ENCODE measurements at regions of chr14 and their contacts with region 1.

Region 1: GRCh38 chr14:91177073-91178034 is 63.5 kb downstream of the DGLUCY start:
- DNase-seq: peak; percentile 38 to 73 (median 48)
- ATAC-seq: peak; percentile 83
- H3K4me3 ChIP-seq: no peak overlapping the region
- H3K27ac ChIP-seq: no peak overlapping the region
- H3K4me1 ChIP-seq: peaks cover 0 to 2% of the 10 kb centered on the region in 2 experiments; a peak in 2 of 5 replicates
- H3K27me3 ChIP-seq: no peaks in the 10 kb centered on the region
- CTCF ChIP-seq: peak; percentile 69 to 77 (median 73)
- EP300 ChIP-seq: no peak
- POLR2A ChIP-seq: no peak
- RAD21 ChIP-seq: peak; percentile 77 to 91

Region 2: GRCh38 chr14:90903101-90903500 is 274.3 kb before region 1 on chr14:
- CTCF ChIA-PET with region 1: interaction called, 33 read pairs
- POLR2A ChIA-PET with region 1: interaction called, 4 read pairs
- in situ Hi-C with region 1: loop called (anchors 5 kb)
- intact Hi-C with region 1: loop called (anchors 1 kb)
- DNase-seq: peak; percentile 43 to 59 (median 49)
- ATAC-seq: peak; percentile 92
- H3K4me3 ChIP-seq: no peak overlapping the region
- H3K27ac ChIP-seq: no peak overlapping the region
- H3K4me1 ChIP-seq: no peaks in the 10 kb centered on the region; a peak in 1 of 5 replicates
- H3K27me3 ChIP-seq: no peaks in the 10 kb centered on the region
- CTCF ChIP-seq: peak; percentile 56 to 69 (median 62); a peak in 5 of 6 replicates
- EP300 ChIP-seq: no peak
- POLR2A ChIP-seq: no peak
- RAD21 ChIP-seq: peak; percentile 66 to 79

Region 3: GRCh38 chr14:91138511-91139359 is 38.6 kb before region 1 on chr14:
- CTCF ChIA-PET with region 1: interaction called, 5 read pairs
- POLR2A ChIA-PET with region 1: no interaction called
- in situ Hi-C with region 1: no loop called
- intact Hi-C with region 1: loop called (anchors 2 kb)
- DNase-seq: peak; percentile 34 to 73 (median 51)
- ATAC-seq: peak; percentile 89
- H3K4me3 ChIP-seq: no peak overlapping the region
- H3K27ac ChIP-seq: peak overlapping the region; percentile 6; the same call in 1 of the 3 replicates
- H3K4me1 ChIP-seq: peaks cover 0 to 20% of the 10 kb centered on the region in 2 experiments; a peak in 3 of 5 replicates
- H3K27me3 ChIP-seq: no peaks in the 10 kb centered on the region
- CTCF ChIP-seq: peak; percentile 68 to 75 (median 71)
- EP300 ChIP-seq: no peak
- POLR2A ChIP-seq: no peak
- RAD21 ChIP-seq: peak; percentile 34 to 62

Region 4: GRCh38 chr14:91202234-91202974 is 25.1 kb after region 1 on chr14:
- CTCF ChIA-PET with region 1: no interaction called
- POLR2A ChIA-PET with region 1: no interaction called
- in situ Hi-C with region 1: no loop called
- intact Hi-C with region 1: loop called (anchors 2 kb)
- DNase-seq: peak; percentile 70 to 94 (median 73)
- ATAC-seq: peak; percentile 96
- H3K4me3 ChIP-seq: no peak overlapping the region; the same call in 1 of the 2 replicates
- H3K27ac ChIP-seq: peak overlapping the region; percentile 86
- H3K4me1 ChIP-seq: peaks cover 11 to 23% of the 10 kb centered on the region in 2 experiments
- H3K27me3 ChIP-seq: no peaks in the 10 kb centered on the region
- CTCF ChIP-seq: no peak
- EP300 ChIP-seq: peak; percentile 91
- POLR2A ChIP-seq: peak; percentile 38; the same call in 1 of the 2 replicates
- RAD21 ChIP-seq: peak in 1 of 2 experiments; percentile 38; a peak in 1 of 4 replicates

Region 5: GRCh38 chr14:91253795-91254323 is 76.5 kb after region 1 on chr14:
- CTCF ChIA-PET with region 1: no interaction called
- POLR2A ChIA-PET with region 1: interaction called, 3 read pairs
- in situ Hi-C with region 1: no loop called
- intact Hi-C with region 1: loop called (anchors 2 kb)
- DNase-seq: no peak
- ATAC-seq: peak; percentile 13
- H3K4me3 ChIP-seq: peak overlapping the region; percentile 47
- H3K27ac ChIP-seq: peak overlapping the region; percentile 70; the same call in 2 of the 3 replicates
- H3K4me1 ChIP-seq: peaks cover 30 to 36% of the 10 kb centered on the region in 2 experiments
- H3K27me3 ChIP-seq: no peaks in the 10 kb centered on the region
- CTCF ChIP-seq: no peak
- EP300 ChIP-seq: no peak
- POLR2A ChIP-seq: no peak
- RAD21 ChIP-seq: no peak

Region 6: DNA sequence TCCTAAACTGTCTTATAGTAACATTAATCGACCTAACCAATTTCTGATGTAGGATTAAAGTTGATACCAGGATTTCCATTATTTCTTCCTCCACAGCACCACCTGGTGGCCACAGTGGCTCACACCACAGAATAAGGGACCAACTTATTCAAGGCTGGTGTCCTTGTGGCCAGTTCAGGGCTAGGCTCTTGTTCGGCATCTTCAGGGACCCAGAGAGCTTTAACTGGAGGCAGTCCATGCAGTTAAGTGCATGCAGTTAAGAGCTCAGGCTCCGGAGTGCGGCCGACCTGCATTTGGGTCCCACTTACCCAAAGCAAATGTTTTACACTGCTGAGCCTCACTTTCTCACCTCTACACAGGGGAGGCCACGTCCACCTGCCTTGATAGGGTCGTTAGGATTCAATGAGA is 109.2 kb after region 1 on chr14:
- CTCF ChIA-PET with region 1: interaction called, 29 read pairs
- POLR2A ChIA-PET with region 1: no interaction called
- in situ Hi-C with region 1: loop called (anchors 5 kb)
- intact Hi-C with region 1: loop called (anchors 1 kb)
- DNase-seq: peak; percentile 73 to 79 (median 74)
- ATAC-seq: peak; percentile 99
- H3K4me3 ChIP-seq: no peak overlapping the region
- H3K27ac ChIP-seq: no peak overlapping the region
- H3K4me1 ChIP-seq: no peaks in the 10 kb centered on the region
- H3K27me3 ChIP-seq: no peaks in the 10 kb centered on the region
- CTCF ChIP-seq: peak; percentile 82 to 95 (median 88)
- EP300 ChIP-seq: no peak
- POLR2A ChIP-seq: no peak
- RAD21 ChIP-seq: peak; percentile 73 to 90

Region 7: DNA sequence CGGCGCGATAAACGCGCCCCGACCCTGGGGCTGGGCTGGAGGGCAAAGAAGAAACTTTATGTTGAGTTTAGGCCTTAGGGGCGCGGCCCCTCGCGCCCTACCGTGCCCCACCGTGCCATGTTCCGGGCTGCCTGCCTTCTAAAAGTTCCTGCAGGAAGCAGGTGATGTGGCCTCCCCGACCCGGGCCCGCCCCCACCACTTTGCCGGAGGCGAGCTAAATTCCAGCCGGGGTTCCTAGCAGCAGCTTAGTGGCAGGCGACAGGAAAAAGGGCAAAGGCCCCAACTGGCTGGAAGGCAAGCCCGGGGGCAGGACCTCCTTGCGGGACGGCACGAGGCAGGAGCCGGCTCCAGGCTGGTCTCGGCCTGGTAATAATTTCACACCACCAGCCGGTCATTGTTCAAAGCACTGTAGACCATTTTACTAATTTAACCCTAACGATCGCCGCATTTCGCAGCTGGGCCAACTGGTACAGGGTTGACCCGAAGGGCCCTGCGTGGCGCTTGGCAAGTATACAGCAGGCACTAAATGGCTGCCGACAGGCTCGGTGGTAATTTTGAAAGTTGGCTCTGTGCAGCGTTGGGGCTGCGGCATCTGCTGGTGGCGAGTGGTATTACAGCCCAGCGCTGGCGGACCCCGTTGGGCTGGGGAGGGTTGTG is 241.2 kb after region 1 on chr14:
- CTCF ChIA-PET with region 1: no interaction called
- POLR2A ChIA-PET with region 1: no interaction called
- in situ Hi-C with region 1: no loop called
- intact Hi-C with region 1: loop called (anchors 10 kb)
- DNase-seq: peak; percentile 41 to 75 (median 42)
- ATAC-seq: peak; percentile 67
- H3K4me3 ChIP-seq: peak overlapping the region; percentile 76
- H3K27ac ChIP-seq: peak overlapping the region; percentile 82
- H3K4me1 ChIP-seq: peaks cover 18 to 27% of the 10 kb centered on the region in 2 experiments; a peak in 4 of 5 replicates
- H3K27me3 ChIP-seq: no peaks in the 10 kb centered on the region
- CTCF ChIP-seq: peak; percentile 76 to 89 (median 82)
- EP300 ChIP-seq: no peak
- POLR2A ChIP-seq: no peak; the same call in 1 of the 2 replicates
- RAD21 ChIP-seq: peak; percentile 75 to 83